A673 (cell line): ENCODE measurements at regions of chr19 and their contacts with region 1.

Region 1: GRCh38 chr19:39970675-39971379 is at the start of gene PSMC4:
- DNase-seq: peak; percentile 99
- H3K4me3 ChIP-seq: peak within 1 kb of the TSS; percentile 68
- H3K27ac ChIP-seq: peak within 1 kb of the TSS; percentile 95
- H3K4me1 ChIP-seq: peaks cover 27% of the 10 kb centered on the region
- H3K27me3 ChIP-seq: no peaks in the 10 kb centered on the region
- CTCF ChIP-seq: peak; percentile 96
- total RNA-seq, gene PSMC4: 268 and 291 TPM in 2 replicates

Region 2: DNA sequence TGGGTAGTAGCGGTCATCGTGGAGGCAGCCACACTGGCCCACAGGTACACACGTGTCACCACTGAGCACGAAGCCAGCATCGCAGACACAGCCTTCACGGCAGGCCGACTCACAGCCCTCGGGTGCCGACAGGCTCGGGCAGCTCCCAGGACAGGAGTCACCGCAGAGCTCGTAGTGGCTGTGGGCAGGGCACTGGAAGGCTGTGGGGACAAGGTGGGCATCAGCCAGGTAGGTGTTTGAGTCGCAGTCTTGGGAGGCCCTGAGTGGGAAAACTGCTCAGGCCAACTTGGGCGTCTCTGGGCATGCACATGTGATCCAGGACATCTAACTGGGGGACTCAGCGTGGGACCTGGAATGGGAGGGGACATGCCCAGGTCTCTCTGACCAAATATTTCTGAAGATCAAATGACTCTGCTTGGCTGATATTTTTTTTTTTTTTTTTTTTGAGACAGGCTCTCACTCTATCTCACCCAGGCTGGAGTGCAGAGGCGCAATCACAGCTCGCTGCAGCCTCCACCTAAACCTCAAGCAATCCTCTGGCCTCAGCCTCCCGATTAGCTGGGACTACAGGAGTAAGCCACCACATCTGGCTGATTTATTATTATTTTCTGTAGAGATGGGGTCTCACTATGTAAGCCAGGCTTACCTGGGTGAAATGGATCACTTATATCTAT is 80.8 kb before region 1 on chr19:
- CTCF ChIA-PET with region 1: no interaction called
- POLR2A ChIA-PET with region 1: no interaction called
- intact Hi-C with region 1: loop called (anchors 5 kb)
- DNase-seq: no peak
- H3K4me3 ChIP-seq: no peak overlapping the region
- H3K27ac ChIP-seq: no peak overlapping the region
- H3K4me1 ChIP-seq: no peaks in the 10 kb centered on the region
- H3K27me3 ChIP-seq: no peaks in the 10 kb centered on the region
- CTCF ChIP-seq: no peak